ENCODE measurements at regions of chr6 and their contacts with region 1.

Region 1: GRCh38 chr6:163416557-163417253 is 2.2 kb downstream of the QKI start:
- DNase-seq: peak; percentile 56
- ATAC-seq: no peak
- H3K4me3 Mint-ChIP-seq: peak overlapping the region; percentile 74
- H3K27ac Mint-ChIP-seq: peak overlapping the region; percentile 88
- H3K4me1 Mint-ChIP-seq: peaks cover 46% of the 10 kb centered on the region
- H3K27me3 Mint-ChIP-seq: no peaks in the 10 kb centered on the region
- CTCF ChIP-seq: peak; percentile 82

Region 2: DNA sequence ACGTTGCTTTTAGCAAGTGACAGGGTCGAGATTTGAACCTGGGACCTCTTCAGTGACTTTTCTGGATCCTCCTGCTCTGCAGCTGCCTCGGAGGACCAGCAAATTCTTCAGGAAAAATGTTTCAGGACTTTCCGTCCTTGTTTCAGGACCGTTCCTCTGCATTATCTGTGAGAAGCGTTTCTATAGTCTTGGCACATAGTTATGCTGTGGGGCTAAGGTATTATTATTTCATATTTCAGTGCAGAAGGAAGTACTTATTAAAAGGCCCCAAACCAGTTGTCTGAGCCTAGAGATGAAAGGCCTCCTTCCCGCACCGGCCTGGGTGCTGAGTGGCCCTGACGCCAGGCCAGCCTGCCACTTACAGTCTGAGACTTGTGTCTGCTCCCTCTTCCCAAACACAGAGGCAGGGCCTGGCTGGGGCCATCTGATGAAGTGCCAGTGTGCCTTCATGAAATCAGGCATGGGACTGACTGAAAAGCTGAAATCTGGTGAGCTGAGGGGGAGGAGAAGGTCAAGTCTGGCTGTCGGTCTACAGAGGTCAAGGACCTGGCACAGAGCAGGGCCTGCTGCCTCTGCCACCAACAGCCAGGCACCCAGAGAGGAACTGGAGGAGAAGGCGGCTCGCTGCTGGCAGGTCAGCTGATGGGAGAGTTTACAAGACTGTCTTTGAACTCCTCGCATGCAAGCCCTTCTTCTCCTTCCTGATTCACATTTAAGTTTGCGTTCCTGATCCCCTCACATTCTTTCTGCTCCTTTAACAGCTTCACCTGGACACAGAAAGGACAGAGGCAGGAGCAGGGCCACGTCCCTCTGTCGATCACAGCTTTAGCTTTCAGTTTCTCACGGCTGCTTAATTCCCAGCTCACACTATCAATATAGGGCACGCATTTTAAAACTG is 11.0 kb before region 1 on chr6:
- CTCF ChIA-PET with region 1: no interaction called
- POLR2A ChIA-PET with region 1: interaction called, 10 read pairs
- intact Hi-C with region 1: no loop called
- DNase-seq: peak; percentile 21
- ATAC-seq: peak; percentile 78
- H3K4me3 Mint-ChIP-seq: peak overlapping the region; percentile 72
- H3K27ac Mint-ChIP-seq: peak overlapping the region; percentile 82
- H3K4me1 Mint-ChIP-seq: peaks cover 11% of the 10 kb centered on the region
- H3K27me3 Mint-ChIP-seq: peaks cover 2% of the 10 kb centered on the region
- CTCF ChIP-seq: no peak

Region 3: GRCh38 chr6:163554663-163555062 is 138.0 kb after region 1 on chr6:
- CTCF ChIA-PET with region 1: interaction called, 20 read pairs
- POLR2A ChIA-PET with region 1: no interaction called
- intact Hi-C with region 1: loop called (anchors 5 kb)
- DNase-seq: peak; percentile 83
- ATAC-seq: peak; percentile 85
- H3K4me3 Mint-ChIP-seq: no peak overlapping the region
- H3K27ac Mint-ChIP-seq: no peak overlapping the region
- H3K4me1 Mint-ChIP-seq: peaks cover 9% of the 10 kb centered on the region
- H3K27me3 Mint-ChIP-seq: no peaks in the 10 kb centered on the region
- CTCF ChIP-seq: peak; percentile 76

Measured in activated CD8-positive, alpha-beta T cell treated with anti-CD3 and anti-CD28 coated beads for 36 hours (primary cell).